ENCODE measurements at regions of chr12 and their contacts with region 1.

Region 1: DNA sequence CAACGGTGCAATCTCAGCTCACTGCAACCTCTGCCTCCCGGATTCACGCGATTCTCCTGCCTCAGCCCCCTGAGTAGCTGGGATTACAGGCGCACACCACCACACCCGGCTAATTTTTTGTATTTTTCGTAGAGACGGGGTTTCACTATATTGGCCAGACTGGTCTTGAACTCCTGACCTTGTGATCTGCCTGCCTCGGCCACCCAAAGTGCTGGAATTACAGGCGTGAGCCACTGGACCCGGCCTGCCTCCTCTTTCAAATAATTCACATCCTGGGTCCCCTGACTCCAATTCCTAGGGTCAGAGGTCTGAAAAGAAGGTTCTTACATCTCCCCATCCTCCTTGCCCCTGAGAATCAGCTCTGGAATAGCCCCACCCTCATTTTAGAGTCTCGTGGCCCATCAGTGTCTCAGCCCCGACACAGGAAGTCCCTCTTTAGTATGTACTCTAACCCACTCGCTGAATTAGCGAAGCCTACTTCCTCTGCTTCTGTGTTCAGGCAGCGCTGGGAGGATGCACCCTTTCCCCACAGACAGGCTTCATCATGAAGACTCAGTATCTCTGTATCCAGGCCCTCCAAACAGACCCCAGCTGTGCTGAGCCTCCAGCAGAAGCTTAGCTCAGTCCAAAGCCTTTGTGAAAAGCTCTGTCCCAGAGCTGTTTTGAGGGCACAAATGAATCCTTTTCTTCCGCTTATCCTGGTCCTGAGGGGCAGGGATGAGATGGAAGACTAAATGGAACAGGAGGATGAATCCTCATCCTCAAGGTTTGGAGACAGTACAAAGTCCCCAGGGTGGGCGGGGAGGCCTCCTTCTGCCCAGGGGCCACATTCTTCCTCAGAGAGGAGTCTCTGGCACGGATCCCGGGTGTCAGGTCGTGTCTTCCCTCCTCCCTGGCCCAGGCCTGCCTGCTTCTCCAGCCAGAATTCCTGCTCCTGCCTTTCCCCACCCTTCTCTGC is 3.5 kb downstream of the LPAR5 start:
- DNase-seq: peak; percentile 83
- ATAC-seq: peak; percentile 44
- H3K4me3 ChIP-seq: peak overlapping the region; percentile 12 to 70 (median 55)
- H3K4me3 Mint-ChIP-seq: peak overlapping the region; percentile 97
- H3K27ac ChIP-seq: peak overlapping the region; percentile 85 to 86
- H3K27ac Mint-ChIP-seq: peak overlapping the region; percentile 99
- H3K4me1 ChIP-seq: peaks cover 66 to 88% of the 10 kb centered on the region in 2 donors
- H3K4me1 Mint-ChIP-seq: peaks cover 73% of the 10 kb centered on the region
- H3K27me3 ChIP-seq: no peaks in the 10 kb centered on the region
- H3K27me3 Mint-ChIP-seq: no peaks in the 10 kb centered on the region
- CTCF ChIP-seq: no peak

Region 2: DNA sequence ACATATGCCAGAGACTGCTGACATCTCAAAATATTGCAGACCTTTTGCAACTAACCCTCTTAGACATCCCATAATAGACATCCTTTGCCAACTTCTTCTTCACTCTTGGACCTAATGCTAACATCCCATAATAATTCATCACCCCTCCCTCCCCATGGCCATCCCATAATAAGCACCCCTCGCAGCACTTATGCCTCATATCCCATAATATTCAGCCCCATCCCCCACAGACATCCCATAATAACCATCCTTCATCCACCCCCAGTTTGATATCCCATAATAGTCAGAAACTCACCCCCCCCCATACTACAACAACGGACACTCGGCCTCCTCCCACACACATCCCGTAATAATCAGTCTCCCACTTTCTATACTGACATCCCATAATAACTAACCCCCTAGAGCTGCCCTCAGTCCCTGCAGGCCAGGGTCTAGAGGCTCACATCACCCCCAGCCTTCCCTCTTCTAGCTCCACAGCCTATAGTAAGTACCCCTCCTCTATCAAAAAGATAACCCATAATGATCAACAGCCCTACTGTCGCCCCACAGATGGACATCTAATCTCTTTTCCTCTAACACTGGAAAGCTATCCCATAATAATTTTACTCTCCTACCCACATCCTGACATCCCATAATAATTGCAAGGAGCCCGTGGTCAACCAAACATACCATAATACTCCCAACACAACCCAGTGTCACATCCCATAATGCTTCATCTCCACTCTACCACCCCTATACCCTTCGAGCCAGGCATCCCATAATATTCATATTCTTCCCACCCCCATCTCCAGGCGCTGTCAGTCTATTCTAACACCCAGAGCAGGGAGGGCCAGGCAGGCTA is 24.3 kb before region 1 on chr12:
- CTCF ChIA-PET with region 1: interaction called, 6 read pairs
- POLR2A ChIA-PET with region 1: interaction called, 19 read pairs
- intact Hi-C with region 1: loop called (anchors 1 kb)
- DNase-seq: peak; percentile 90
- ATAC-seq: peak; percentile 20
- H3K4me3 ChIP-seq: no peak overlapping the region
- H3K4me3 Mint-ChIP-seq: no peak overlapping the region
- H3K27ac ChIP-seq: peak overlapping the region; percentile 90 to 95
- H3K27ac Mint-ChIP-seq: no peak overlapping the region
- H3K4me1 ChIP-seq: peaks cover 56 to 63% of the 10 kb centered on the region in 2 donors
- H3K4me1 Mint-ChIP-seq: peaks cover 58% of the 10 kb centered on the region
- H3K27me3 ChIP-seq: no peaks in the 10 kb centered on the region
- H3K27me3 Mint-ChIP-seq: no peaks in the 10 kb centered on the region
- CTCF ChIP-seq: no peak

Region 3: DNA sequence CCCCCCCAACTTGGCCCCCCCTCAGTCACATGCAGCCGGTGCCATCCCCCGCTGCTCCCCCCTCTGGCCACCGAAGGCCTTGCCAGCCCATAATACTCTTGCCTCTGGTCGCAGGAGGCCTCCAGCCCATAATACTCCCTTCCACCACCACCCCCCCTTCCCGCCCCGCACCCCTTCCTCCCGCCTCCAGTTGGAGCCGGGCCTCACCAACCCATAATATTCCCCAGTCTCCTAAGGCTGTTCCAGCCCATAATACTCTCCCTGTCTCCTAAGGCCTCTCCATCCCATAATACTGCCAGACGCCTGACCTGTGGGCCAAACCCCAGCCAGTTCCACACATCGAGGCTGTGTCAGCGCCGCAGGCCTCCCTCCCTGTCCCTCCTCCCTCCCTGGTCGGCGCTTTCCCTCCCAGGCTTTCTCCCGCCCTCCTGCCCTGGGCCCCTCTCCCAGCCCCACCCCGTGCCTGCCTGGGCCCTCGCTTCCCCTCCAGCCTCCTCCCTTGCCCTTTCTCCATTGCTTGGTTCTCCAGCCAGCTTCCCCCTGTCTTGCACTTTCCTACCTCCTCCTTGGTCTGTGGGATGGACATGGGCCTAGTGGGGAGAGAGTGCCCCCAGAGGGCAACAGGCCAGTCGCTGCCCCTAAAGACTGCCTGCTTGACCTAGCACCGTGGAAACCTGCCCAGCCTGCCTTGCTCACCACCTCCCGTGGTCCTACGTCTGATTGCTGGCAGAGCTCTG is 18.4 kb before region 1 on chr12:
- CTCF ChIA-PET with region 1: interaction called, 58 read pairs
- POLR2A ChIA-PET with region 1: interaction called, 19 read pairs
- intact Hi-C with region 1: loop called (anchors 2 kb)
- DNase-seq: peak; percentile 81
- ATAC-seq: peak; percentile 48
- H3K4me3 ChIP-seq: no peak overlapping the region
- H3K4me3 Mint-ChIP-seq: peak overlapping the region; percentile 24
- H3K27ac ChIP-seq: peak overlapping the region; percentile 63 to 88
- H3K27ac Mint-ChIP-seq: peak overlapping the region; percentile 87
- H3K4me1 ChIP-seq: peaks cover 32 to 51% of the 10 kb centered on the region in 2 donors
- H3K4me1 Mint-ChIP-seq: peaks cover 65% of the 10 kb centered on the region
- H3K27me3 ChIP-seq: no peaks in the 10 kb centered on the region
- H3K27me3 Mint-ChIP-seq: no peaks in the 10 kb centered on the region
- CTCF ChIP-seq: no peak

Region 4: GRCh38 chr12:6620137-6620884 is 12.0 kb before region 1 on chr12:
- CTCF ChIA-PET with region 1: interaction called, 58 read pairs
- POLR2A ChIA-PET with region 1: interaction called, 12 read pairs
- intact Hi-C with region 1: loop called (anchors 1 kb)
- DNase-seq: peak; percentile 74
- ATAC-seq: peak; percentile 46
- H3K4me3 ChIP-seq: no peak overlapping the region
- H3K4me3 Mint-ChIP-seq: peak overlapping the region; percentile 45
- H3K27ac ChIP-seq: peak overlapping the region in 1 of 2 donors; percentile 28
- H3K27ac Mint-ChIP-seq: peak overlapping the region; percentile 72
- H3K4me1 ChIP-seq: peaks cover 3 to 30% of the 10 kb centered on the region in 2 donors
- H3K4me1 Mint-ChIP-seq: peaks cover 41% of the 10 kb centered on the region
- H3K27me3 ChIP-seq: no peaks in the 10 kb centered on the region
- H3K27me3 Mint-ChIP-seq: no peaks in the 10 kb centered on the region
- CTCF ChIP-seq: peak; percentile 66

Region 5: DNA sequence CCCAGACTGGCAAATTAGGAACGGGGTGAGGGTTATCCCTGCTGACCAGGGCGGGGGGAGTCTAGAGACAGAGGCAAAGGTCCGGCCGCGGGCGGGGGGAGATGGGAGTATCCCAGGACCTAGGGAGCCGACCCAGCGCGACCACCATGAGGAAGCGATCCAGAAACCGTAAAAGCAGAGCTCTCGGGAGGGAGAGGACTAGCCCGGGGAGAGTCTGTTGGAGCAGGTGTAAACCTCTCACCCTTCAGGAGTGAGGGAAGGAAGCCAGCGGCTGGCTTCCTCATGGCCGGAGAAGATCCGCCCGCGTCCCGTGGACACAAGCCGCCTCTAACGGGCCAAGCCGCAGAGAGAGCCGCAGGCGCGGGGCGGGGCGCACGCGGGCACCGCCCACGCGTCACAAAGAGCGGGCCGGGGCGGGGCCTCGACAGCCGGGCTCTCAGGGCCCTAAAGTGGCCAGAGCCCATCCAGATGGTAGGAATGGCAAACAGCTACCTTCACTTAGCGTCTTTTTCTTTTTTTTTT is 14.8 kb after region 1 on chr12 and contains the start of gene ACRBP:
- CTCF ChIA-PET with region 1: interaction called, 15 read pairs
- POLR2A ChIA-PET with region 1: interaction called, 25 read pairs
- intact Hi-C with region 1: loop called (anchors 1 kb)
- DNase-seq: peak; percentile 73
- ATAC-seq: peak; percentile 83
- H3K4me3 ChIP-seq: peak within 1 kb of the TSS; percentile 31 to 77 (median 60)
- H3K4me3 Mint-ChIP-seq: peak within 1 kb of the TSS; percentile 83
- H3K27ac ChIP-seq: peak within 1 kb of the TSS in 1 of 2 donors; percentile 60
- H3K27ac Mint-ChIP-seq: peak within 1 kb of the TSS; percentile 68
- H3K4me1 ChIP-seq: peaks cover 24 to 43% of the 10 kb centered on the region in 2 donors
- H3K4me1 Mint-ChIP-seq: peaks cover 40% of the 10 kb centered on the region
- H3K27me3 ChIP-seq: no peaks in the 10 kb centered on the region
- H3K27me3 Mint-ChIP-seq: no peaks in the 10 kb centered on the region
- CTCF ChIP-seq: no peak
- total RNA-seq, gene ACRBP: 11.9 and 12.3 TPM in 2 replicates

Region 6: GRCh38 chr12:6944381-6945186 is 312.3 kb after region 1 on chr12:
- CTCF ChIA-PET with region 1: interaction called, 3 read pairs
- POLR2A ChIA-PET with region 1: interaction called, 4 read pairs
- intact Hi-C with region 1: loop called (anchors 10 kb)
- DNase-seq: peak; percentile 91
- ATAC-seq: peak; percentile 46
- H3K4me3 ChIP-seq: peak overlapping the region; percentile 25 to 92 (median 80)
- H3K4me3 Mint-ChIP-seq: peak overlapping the region; percentile 97
- H3K27ac ChIP-seq: peak overlapping the region; percentile 93 to 99
- H3K27ac Mint-ChIP-seq: peak overlapping the region; percentile 97
- H3K4me1 ChIP-seq: peaks cover 56 to 73% of the 10 kb centered on the region in 2 donors
- H3K4me1 Mint-ChIP-seq: peaks cover 63% of the 10 kb centered on the region
- H3K27me3 ChIP-seq: no peaks in the 10 kb centered on the region
- H3K27me3 Mint-ChIP-seq: no peaks in the 10 kb centered on the region
- CTCF ChIP-seq: peak; percentile 90